ENCODE measurements at regions of chr9 and their contacts with region 1.

Region 1: DNA sequence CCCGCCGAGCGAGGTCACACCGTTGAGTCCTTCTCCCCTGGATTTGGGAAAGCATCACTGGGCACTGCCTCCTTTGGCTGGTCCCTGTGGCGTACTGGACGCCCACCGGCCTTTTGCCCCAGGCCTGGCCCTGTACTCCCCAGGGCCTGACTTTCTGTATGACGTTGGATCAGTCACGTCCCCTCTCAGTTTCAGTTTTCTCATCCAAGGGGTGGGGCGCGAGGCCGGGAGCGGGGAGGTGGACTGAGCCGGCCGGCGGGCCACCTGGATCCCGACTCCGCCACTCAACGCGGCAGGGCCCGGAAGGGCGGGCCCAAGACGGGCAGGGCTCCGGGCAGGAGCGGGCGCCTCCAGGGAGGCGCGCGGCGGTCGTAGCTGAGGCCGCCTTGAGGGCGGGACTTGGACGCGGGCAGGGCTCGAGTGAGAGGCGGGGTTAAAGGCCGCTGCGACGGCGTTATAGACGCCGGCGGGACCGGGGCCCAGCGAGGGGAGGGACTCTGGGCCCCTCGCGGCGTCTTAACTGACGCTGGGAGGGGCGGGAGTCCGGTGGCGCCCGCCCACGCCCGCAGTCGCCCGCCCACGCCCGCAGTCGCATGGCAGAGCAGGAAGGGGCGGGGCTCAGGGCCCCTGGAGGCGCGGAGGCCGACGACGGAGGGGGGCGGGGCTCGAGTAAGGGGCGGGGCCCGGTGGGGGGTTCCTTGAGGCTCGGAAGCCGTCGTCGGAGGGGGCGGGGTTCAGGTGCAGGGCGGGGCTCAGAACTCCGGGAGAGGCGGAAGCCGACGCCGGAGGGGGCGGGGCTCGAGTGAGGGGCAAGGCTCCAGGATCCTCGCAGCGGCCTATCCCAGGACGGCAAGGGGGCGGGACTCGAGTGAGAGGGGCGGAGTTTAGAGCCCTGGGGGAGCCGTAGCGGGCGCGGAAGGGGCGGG is 549 bp upstream of the CARD19 start:
- DNase-seq: peak; percentile 100
- H3K4me3 Mint-ChIP-seq: peak overlapping the region; percentile 89
- H3K27ac Mint-ChIP-seq: peak overlapping the region; percentile 99
- H3K4me1 Mint-ChIP-seq: peaks cover 73% of the 10 kb centered on the region
- H3K27me3 Mint-ChIP-seq: no peaks in the 10 kb centered on the region

Region 2: GRCh38 chr9:92325269-92325990 is 770.0 kb before region 1 on chr9 and contains the starts of genes CENPP and NOL8:
- intact Hi-C with region 1: loop called (anchors 1 kb)
- DNase-seq: peak; percentile 81
- H3K4me3 Mint-ChIP-seq: peak within 1 kb of the TSS; percentile 93
- H3K27ac Mint-ChIP-seq: peak within 1 kb of the TSS; percentile 96
- H3K4me1 Mint-ChIP-seq: peaks cover 32% of the 10 kb centered on the region
- H3K27me3 Mint-ChIP-seq: no peaks in the 10 kb centered on the region
- total RNA-seq, gene CENPP: 24.6 and 26.0 TPM in 2 replicates
- total RNA-seq, gene NOL8: 84.4 and 95.5 TPM in 2 replicates

Region 3: DNA sequence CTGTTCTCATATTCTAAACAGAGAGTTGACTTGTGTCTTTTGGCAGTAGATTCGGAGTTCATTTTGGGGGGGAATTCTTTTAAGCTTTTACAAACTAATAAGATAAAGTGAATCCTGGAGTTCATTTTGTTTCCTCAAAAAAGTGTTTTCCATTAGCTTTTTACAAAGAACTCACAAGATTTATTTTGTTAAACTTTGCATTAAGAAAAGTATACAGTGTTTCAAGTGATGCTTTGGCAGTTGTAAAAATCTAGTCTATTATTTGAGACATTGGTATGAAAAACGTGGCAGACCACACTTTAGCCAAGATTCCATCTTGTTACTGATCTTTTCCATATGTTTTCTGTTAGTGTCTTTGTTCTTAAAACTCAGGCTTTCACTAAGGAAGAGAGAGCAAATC is 670.0 kb before region 1 on chr9:
- intact Hi-C with region 1: no loop called
- DNase-seq: no peak
- H3K4me3 Mint-ChIP-seq: no peak overlapping the region
- H3K27ac Mint-ChIP-seq: no peak overlapping the region
- H3K4me1 Mint-ChIP-seq: no peaks in the 10 kb centered on the region
- H3K27me3 Mint-ChIP-seq: no peaks in the 10 kb centered on the region

Region 4: DNA sequence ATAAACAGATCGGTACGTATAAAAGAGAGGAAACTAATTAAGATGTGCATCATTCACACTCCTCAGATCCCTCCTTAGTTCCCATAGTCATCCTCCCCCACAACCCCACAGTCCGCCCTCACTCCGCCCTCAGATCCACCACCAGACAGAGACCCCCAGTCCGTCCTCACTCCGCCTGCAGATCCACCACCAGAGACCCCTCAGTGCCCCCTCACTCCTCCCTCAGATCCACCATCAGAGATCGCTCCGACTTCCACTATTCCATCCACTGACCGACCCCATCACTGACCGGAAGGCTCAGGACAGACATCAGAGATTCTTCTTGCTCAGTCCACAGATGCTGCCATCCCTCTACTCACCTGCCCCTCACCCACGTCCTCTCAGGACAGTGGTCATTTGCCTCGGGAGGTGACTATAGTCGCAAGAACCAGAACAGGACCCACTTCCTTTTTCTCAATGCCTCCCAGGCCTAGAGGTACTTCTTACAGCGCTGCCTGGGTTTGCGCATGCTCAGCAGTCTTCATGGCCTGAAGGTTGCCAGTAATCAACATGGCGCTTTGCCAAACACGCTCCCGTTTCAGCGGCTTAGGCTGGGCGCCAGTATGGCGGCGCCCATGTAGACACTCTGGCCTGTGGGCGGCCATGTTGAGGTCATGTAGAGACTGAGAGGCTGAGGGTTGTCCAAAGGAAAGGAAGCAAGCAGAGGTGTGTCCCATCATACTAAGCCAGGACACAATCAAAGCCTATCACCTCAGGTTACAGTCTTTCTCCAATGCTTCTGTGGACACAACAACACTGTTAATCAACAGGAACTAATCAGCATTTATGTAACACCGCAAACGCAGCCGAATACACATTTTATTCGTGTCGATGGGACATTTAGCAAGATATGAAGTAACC is 217.7 kb before region 1 on chr9 and contains the start of gene ZNF484:
- intact Hi-C with region 1: loop called (anchors 10 kb)
- DNase-seq: peak; percentile 92
- H3K4me3 Mint-ChIP-seq: peak within 1 kb of the TSS; percentile 92
- H3K27ac Mint-ChIP-seq: peak within 1 kb of the TSS; percentile 97
- H3K4me1 Mint-ChIP-seq: peaks cover 46% of the 10 kb centered on the region
- H3K27me3 Mint-ChIP-seq: peaks cover 4% of the 10 kb centered on the region
- total RNA-seq, gene ZNF484: 7.2 and 8.1 TPM in 2 replicates

Region 5: DNA sequence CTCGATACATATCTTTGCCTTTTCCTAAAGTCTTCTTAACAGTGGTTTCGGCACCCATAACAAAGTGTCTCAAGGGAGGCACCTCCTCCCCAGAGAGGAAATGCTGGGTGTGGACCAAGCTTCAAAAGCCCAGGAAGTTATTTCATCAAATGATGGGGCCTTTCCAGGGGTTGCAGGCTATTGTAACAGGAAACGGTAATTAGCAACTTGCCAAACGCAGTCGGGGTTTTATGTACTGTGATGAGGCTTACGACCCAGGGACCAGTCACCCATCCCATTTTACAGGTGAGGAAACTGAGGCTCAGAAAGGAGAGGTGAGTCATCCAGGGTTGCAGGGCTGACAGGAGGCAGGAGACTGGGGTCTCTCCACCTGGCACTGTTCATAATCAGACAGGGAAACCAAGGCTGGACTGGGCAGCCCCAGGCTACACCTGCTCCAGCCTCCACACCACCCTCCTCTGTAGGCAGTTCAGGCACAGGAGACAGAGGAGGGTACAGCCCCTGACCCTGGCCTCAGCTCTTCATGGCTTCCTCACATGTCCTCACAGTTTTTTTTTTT is 66.9 kb before region 1 on chr9:
- intact Hi-C with region 1: loop called (anchors 1 kb)
- DNase-seq: peak; percentile 69
- H3K4me3 Mint-ChIP-seq: peak overlapping the region; percentile 67
- H3K27ac Mint-ChIP-seq: peak overlapping the region; percentile 87
- H3K4me1 Mint-ChIP-seq: peaks cover 56% of the 10 kb centered on the region
- H3K27me3 Mint-ChIP-seq: no peaks in the 10 kb centered on the region

Region 6: GRCh38 chr9:93082841-93083411 is 12.5 kb before region 1 on chr9:
- intact Hi-C with region 1: loop called (anchors 1 kb)
- DNase-seq: no peak
- H3K4me3 Mint-ChIP-seq: no peak overlapping the region
- H3K27ac Mint-ChIP-seq: peak overlapping the region; percentile 58
- H3K4me1 Mint-ChIP-seq: peaks cover 26% of the 10 kb centered on the region
- H3K27me3 Mint-ChIP-seq: no peaks in the 10 kb centered on the region

Region 7: DNA sequence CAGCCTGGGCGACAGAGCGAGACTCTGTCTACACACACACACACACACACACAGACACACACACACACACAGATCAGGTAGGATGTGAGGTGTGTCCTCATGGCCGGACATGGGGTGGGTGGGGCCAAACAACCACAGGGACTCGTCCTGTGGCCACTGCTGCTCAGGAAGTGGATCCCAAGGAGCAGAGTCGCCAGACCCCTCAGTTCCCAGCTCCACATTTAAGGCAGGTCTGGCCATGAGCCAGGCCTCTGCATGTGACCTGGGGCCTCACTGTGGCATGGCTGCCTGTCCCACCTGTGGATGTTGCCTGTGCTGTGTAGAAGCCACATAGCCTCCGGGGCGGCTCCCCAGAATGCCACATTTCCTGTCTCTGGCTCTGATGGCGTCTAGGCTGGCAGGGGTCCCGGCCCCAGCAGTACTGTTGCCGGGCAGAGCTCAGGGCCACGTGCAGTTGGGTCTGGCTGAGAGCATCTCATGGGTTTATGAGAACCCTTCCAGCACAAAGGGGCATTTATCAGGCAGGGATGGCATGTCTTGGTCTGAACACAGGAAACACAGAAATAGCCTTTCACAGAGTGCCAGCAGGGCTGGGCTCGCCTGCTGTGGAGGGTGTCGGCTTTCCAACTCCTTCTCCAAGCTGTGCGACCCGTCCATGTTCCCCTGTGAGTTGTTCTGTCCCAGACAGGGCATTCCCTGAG is 48.5 kb after region 1 on chr9:
- intact Hi-C with region 1: loop called (anchors 5 kb)
- DNase-seq: peak; percentile 43
- H3K4me3 Mint-ChIP-seq: no peak overlapping the region
- H3K27ac Mint-ChIP-seq: peak overlapping the region; percentile 93
- H3K4me1 Mint-ChIP-seq: peaks cover 38% of the 10 kb centered on the region
- H3K27me3 Mint-ChIP-seq: no peaks in the 10 kb centered on the region

Region 8: DNA sequence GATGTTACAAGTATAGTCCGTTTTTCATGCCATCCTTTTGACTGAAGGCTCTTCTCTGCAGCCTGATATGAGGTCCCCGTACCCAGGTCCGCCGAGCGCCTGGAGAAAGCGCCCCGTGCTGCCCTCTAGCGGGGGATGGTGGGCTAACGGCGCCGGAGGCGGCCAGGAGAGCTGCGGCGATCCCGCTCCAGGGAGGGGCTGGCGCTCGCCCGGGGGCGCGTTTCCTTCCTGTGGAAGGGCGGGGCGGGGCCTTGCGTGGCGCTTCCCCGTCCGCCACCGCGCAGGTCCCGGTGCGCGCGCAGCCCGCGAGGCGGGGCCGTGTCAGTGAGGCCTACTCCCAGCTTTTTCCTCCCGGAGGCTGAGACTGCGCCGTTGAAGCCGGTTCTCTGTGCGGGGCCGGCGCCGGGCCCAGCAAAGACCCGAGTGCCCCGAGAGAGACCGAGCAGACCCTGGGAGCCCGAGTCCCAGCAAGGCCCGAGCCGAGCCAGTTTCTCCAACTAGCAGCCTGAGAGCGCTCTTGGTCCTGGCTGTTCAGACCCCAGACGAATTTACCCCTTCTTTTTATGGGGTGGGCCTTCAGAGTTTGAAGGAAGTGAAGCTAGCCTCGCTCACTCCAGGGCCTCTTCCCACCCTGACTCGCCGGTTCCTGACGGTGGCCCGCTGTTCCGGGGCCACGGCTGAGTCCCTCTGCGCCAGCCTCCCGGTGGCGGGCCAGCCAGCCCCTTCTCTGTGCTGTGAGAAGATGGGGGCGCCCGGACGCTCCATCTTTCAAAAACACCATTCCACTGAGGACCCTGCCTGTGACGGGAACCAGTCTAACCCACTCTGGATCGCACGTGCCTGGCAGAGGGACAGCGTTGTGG is 471.2 kb after region 1 on chr9:
- intact Hi-C with region 1: loop called (anchors 1 kb)
- DNase-seq: peak; percentile 99
- H3K4me3 Mint-ChIP-seq: peak overlapping the region; percentile 85
- H3K27ac Mint-ChIP-seq: peak overlapping the region; percentile 87
- H3K4me1 Mint-ChIP-seq: peaks cover 22% of the 10 kb centered on the region
- H3K27me3 Mint-ChIP-seq: no peaks in the 10 kb centered on the region

Region 9: GRCh38 chr9:93620878-93621820 is 525.7 kb after region 1 on chr9:
- intact Hi-C with region 1: no loop called
- DNase-seq: no peak
- H3K4me3 Mint-ChIP-seq: no peak overlapping the region
- H3K27ac Mint-ChIP-seq: no peak overlapping the region
- H3K4me1 Mint-ChIP-seq: peaks cover 6% of the 10 kb centered on the region
- H3K27me3 Mint-ChIP-seq: no peaks in the 10 kb centered on the region

Measured in activated T-helper 1 cell treated with anti-CD3 and anti-CD28 coated beads, Interleukin-12 subunit alpha, Interleukin-12 subunit beta, Interleukin-2, Interleukin-4 antibody, amounts not matched to agents 30 ng/mL and 10 ng/mL and 1 ng/mL, durations not matched to agents 14 hours and 24 hours and 36 hours (primary cell).